PC-3 (cell line): ENCODE measurements at regions of chr1 and their contacts with region 1.

Region 1: DNA sequence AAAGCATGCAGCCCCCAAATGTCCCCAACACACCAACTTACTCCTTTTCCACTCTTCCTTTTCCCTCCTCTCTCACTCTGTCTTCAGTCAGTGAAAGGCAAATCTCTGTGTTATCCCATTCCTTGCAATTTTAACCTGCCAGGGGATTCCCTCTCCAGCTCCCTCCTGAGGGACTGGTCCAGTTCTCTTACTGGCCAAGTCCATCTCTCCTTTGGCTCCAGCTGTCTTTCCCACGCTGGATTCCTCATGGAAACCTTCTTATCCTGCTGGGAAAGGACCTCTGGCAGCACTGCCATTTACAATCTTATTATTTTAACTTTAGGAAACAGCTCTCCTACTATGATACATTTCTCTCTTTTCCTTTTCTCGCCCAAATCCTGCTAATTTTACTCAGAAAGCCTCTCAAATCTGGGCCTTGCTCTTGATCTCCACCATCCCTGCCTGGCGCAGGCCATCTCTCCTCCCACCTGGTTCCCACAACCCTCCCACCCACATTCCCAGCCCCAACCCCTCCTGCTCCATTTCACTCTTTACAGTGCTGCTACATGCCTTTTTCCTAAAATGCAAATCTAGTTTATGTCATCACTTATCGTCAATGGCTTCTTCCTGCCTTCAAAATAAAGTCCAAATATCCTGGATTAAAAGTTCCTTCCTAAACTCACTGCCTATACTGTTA is 72.7 kb upstream of the CNN3 start:
- DNase-seq: no peak
- ATAC-seq: no peak
- H3K4me3 ChIP-seq: no peak overlapping the region
- H3K27ac ChIP-seq: peak overlapping the region; percentile 46
- H3K4me1 ChIP-seq: peaks cover 17% of the 10 kb centered on the region
- H3K27me3 ChIP-seq: no peaks in the 10 kb centered on the region
- CTCF ChIP-seq: no peak

Region 2: DNA sequence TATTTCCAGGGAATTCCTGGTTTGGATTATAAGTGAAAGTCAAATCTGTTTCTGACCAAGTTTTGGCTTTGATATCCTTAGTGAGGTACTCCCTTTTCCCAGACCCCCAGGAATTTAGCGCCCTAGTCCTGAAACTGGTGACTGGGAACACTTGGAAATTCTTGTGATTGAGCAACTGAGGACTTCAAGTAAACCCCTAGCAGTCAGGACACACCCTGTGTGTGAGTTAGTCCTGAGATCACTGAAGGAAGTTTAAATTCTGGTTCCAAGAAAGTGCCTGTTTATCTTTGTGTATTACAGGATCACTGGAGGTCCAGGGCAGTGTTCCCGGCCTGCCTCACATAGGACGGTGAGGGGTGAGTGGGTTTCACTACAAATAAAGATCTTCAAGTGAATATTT is 363.0 kb before region 1 on chr1:
- CTCF ChIA-PET with region 1: no interaction called
- POLR2A ChIA-PET with region 1: no interaction called
- intact Hi-C with region 1: no loop called
- DNase-seq: no peak
- ATAC-seq: no peak
- H3K4me3 ChIP-seq: no peak overlapping the region
- H3K27ac ChIP-seq: no peak overlapping the region
- H3K4me1 ChIP-seq: no peaks in the 10 kb centered on the region
- H3K27me3 ChIP-seq: no peaks in the 10 kb centered on the region
- CTCF ChIP-seq: no peak

Region 3: DNA sequence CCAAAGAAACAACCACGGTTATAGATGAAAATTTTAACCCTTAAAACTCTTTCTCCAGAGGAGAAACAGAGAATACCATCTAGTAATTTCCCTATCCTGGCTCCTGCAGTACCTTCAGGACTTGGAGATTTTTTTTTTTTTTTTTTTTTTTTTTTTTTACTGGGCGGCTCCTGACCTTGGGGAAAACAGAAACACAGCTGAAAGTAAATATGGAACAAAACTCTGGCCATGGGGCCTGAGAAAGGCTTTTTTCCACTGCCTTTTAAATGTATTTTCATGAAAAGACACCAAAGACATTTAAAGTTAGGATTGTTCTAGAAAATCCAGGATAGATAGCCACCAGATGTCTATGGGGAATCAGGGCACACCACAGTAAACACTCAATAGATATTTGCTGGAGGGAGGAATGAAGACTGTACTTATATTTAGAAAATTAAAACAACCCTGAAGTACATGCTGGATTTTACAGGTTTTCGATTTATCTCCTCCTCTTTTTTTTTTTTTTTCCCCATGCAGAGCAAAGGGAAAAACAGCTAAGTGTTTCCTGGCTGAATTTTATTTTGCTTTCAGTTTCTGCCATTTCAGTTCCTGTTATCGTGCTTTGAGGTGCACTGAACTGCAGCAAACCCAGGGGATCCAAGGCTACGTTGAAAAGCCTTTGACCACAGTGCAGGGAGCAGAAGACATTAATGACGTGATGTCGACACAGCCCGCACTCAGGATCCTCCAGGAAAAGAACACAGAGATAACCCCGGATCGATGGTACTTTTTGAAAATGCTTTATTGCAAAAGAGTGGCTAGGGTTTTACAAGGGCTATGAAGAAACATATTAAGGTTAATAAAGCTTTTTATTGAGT is 37.0 kb before region 1 on chr1:
- CTCF ChIA-PET with region 1: no interaction called
- POLR2A ChIA-PET with region 1: interaction called, 15 read pairs
- intact Hi-C with region 1: no loop called
- DNase-seq: peak; percentile 23
- ATAC-seq: peak; percentile 88
- H3K4me3 ChIP-seq: peak overlapping the region; percentile 64
- H3K27ac ChIP-seq: 0 out of 2 replicates have a peak overlapping the region, but pooled peaks have one; percentile 2
- H3K4me1 ChIP-seq: peaks cover 10% of the 10 kb centered on the region; the same call in 1 of the 2 replicates
- H3K27me3 ChIP-seq: no peaks in the 10 kb centered on the region
- CTCF ChIP-seq: no peak